GM12878 (cell line): ENCODE measurements at regions of chr3 and their contacts with region 1.

Region 1: GRCh38 chr3:88113311-88114162 is 36.2 kb upstream of the C3orf38 start:
- DNase-seq: peak; percentile 35
- ATAC-seq: peak; percentile 99
- H3K4me3 ChIP-seq: no peak overlapping the region
- H3K27ac ChIP-seq: no peak overlapping the region
- H3K4me1 ChIP-seq: no peaks in the 10 kb centered on the region
- H3K27me3 ChIP-seq: no peaks in the 10 kb centered on the region
- CTCF ChIP-seq: peak; percentile 67 to 72 (median 69)
- EP300 ChIP-seq: no peak
- POLR2A ChIP-seq: no peak
- RAD21 ChIP-seq: peak; percentile 77

Region 2: GRCh38 chr3:87350364-87351199 is 763.0 kb before region 1 on chr3:
- CTCF ChIA-PET with region 1: interaction called, 16 read pairs
- POLR2A ChIA-PET with region 1: no interaction called
- RAD21 ChIA-PET with region 1: interaction called, 6 read pairs
- SMC1A ChIA-PET with region 1: interaction called, 4 read pairs
- in situ Hi-C with region 1: no loop called
- intact Hi-C with region 1: no loop called
- DNase-seq: no peak
- ATAC-seq: peak; percentile 96
- H3K4me3 ChIP-seq: no peak overlapping the region
- H3K27ac ChIP-seq: no peak overlapping the region
- H3K4me1 ChIP-seq: no peaks in the 10 kb centered on the region
- H3K27me3 ChIP-seq: no peaks in the 10 kb centered on the region
- CTCF ChIP-seq: peak; percentile 71 to 87 (median 81)
- EP300 ChIP-seq: no peak
- POLR2A ChIP-seq: no peak
- RAD21 ChIP-seq: peak; percentile 76

Region 3: DNA sequence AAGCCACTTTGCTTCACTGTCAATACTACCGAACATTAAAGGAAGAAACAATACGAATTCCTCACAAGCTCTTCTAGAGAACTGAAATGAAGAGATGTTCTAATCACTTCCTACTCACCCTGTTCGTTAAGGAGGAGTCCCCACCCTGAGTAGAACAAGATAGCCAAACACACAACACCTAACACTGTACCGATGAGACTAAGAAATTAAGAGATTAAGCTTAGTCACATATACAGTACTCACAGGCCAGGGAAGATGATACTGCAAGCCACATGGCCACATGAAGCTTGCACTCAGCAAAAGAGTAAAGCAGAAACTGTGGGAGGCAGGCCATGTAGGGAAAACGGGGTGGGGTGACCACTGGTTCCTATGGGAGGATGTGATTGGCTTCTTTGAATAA is 102.7 kb before region 1 on chr3:
- CTCF ChIA-PET with region 1: interaction called, 44 read pairs
- POLR2A ChIA-PET with region 1: interaction called, 3 read pairs
- RAD21 ChIA-PET with region 1: interaction called, 24 read pairs
- SMC1A ChIA-PET with region 1: interaction called, 8 read pairs
- in situ Hi-C with region 1: no loop called
- intact Hi-C with region 1: no loop called
- DNase-seq: no peak
- ATAC-seq: no peak
- H3K4me3 ChIP-seq: no peak overlapping the region
- H3K27ac ChIP-seq: no peak overlapping the region
- H3K4me1 ChIP-seq: no peaks in the 10 kb centered on the region
- H3K27me3 ChIP-seq: no peaks in the 10 kb centered on the region
- CTCF ChIP-seq: no peak
- EP300 ChIP-seq: no peak
- POLR2A ChIP-seq: no peak
- RAD21 ChIP-seq: no peak

Region 4: DNA sequence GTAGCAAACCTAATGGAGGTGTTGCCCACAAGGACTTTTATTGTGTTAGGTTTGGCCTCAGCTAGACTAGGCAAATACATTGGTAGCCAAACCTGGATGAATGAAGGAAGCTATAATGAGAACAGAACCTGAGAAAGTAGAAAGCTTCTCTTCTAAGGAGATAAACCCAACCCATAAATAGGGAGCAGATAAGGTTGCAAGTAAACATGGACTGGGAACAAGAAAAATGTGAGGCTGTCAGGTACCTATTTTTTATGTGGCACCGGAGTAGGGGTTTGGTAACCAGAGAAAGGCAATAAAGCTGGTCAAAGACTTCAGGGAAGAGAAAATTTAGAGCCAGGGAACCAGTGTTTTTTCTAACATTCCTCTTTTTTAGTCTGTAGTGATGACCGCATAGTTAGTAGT is 29.4 kb before region 1 on chr3:
- CTCF ChIA-PET with region 1: interaction called, 17 read pairs
- POLR2A ChIA-PET with region 1: no interaction called
- RAD21 ChIA-PET with region 1: no interaction called
- SMC1A ChIA-PET with region 1: interaction called, 3 read pairs
- in situ Hi-C with region 1: no loop called
- intact Hi-C with region 1: no loop called
- DNase-seq: no peak
- ATAC-seq: no peak
- H3K4me3 ChIP-seq: no peak overlapping the region
- H3K27ac ChIP-seq: no peak overlapping the region
- H3K4me1 ChIP-seq: no peaks in the 10 kb centered on the region
- H3K27me3 ChIP-seq: no peaks in the 10 kb centered on the region
- CTCF ChIP-seq: no peak
- EP300 ChIP-seq: no peak
- POLR2A ChIP-seq: no peak
- RAD21 ChIP-seq: no peak

Region 5: DNA sequence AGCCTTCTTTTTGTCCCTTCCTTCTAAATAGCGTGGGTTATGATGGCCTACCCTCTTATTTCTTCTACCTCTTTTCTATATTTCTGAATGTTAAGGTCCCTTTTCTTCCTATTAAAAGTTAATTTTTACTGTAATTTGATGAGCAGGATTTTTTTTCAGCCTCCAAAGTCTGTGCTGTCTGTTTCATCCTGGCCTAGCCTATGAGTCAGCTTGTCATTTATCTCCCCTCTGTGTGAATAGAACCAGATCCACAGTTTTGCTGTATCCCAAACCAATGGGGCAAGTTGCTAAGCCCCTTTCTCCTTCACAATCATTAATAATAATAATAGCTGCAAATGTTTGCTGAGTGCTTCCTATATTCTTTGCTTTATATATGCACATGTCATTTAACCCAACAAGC is 18.2 kb after region 1 on chr3:
- CTCF ChIA-PET with region 1: interaction called, 28 read pairs
- POLR2A ChIA-PET with region 1: no interaction called
- RAD21 ChIA-PET with region 1: no interaction called
- SMC1A ChIA-PET with region 1: interaction called, 17 read pairs
- in situ Hi-C with region 1: no loop called
- intact Hi-C with region 1: no loop called
- DNase-seq: no peak
- ATAC-seq: no peak
- H3K4me3 ChIP-seq: no peak overlapping the region
- H3K27ac ChIP-seq: no peak overlapping the region
- H3K4me1 ChIP-seq: no peaks in the 10 kb centered on the region
- H3K27me3 ChIP-seq: no peaks in the 10 kb centered on the region
- CTCF ChIP-seq: no peak
- EP300 ChIP-seq: no peak
- POLR2A ChIP-seq: no peak
- RAD21 ChIP-seq: no peak